ENCODE measurements at regions of chr1 and their contacts with region 1.

Region 1: GRCh38 chr1:208245185-208245705 is 1.1 kb upstream of the PLXNA2 start:
- DNase-seq: peak; percentile 95 to 97
- H3K4me3 ChIP-seq: peak overlapping the region; percentile 89 to 94
- H3K27ac ChIP-seq: peak overlapping the region; percentile 86 to 89
- H3K4me1 ChIP-seq: peaks cover 0 to 60% (median 45%) of the 10 kb centered on the region in 4 donors
- H3K27me3 ChIP-seq: no peaks in the 10 kb centered on the region
- CTCF ChIP-seq: peak; percentile 70 to 88

Region 2: GRCh38 chr1:207885129-207886032 is 359.9 kb before region 1 on chr1:
- intact Hi-C with region 1: loop called (anchors 10 kb)
- DNase-seq: peak; percentile 87 to 90
- H3K4me3 ChIP-seq: no peak overlapping the region
- H3K27ac ChIP-seq: peak overlapping the region in 1 of 2 donors; percentile 40
- H3K4me1 ChIP-seq: peaks cover 4 to 39% (median 29%) of the 10 kb centered on the region in 4 donors
- H3K27me3 ChIP-seq: no peaks in the 10 kb centered on the region
- CTCF ChIP-seq: peak; percentile 95 to 97

Region 3: DNA sequence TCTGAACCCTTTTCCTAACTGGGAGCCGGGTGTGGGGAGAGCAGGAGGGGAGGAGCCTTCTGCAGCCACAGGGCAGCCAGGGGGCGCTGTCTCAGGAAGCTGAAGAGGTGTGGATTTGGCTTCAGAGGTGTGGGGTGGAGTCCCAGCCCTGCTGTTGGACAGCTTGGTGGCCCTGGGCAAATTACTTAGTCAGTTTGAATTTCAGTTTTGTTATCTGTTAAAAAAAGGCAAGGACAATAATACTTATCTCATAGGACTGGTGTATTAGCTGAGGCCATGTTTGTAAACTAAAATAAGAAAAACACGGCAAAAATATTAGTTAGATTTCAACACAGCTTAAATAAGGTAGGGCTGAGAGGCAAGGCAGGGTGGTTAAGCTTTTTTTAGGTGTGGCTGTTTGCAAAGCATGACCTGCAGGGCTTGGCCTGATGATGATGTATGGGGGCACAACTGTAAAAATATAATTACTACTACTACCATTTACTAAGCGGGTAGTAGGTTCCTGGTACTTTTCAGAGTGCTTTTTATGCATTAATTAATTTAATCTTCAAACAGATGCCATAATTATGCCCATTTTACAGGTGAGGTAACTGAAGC is 112.9 kb before region 1 on chr1:
- intact Hi-C with region 1: loop called (anchors 5 kb)
- DNase-seq: peak; percentile 80 to 83
- H3K4me3 ChIP-seq: no peak overlapping the region
- H3K27ac ChIP-seq: no peak overlapping the region
- H3K4me1 ChIP-seq: peaks cover 0 to 47% (median 35%) of the 10 kb centered on the region in 4 donors
- H3K27me3 ChIP-seq: no peaks in the 10 kb centered on the region
- CTCF ChIP-seq: peak; percentile 62 to 72

Region 4: GRCh38 chr1:208142590-208143382 is 102.5 kb before region 1 on chr1:
- intact Hi-C with region 1: no loop called
- DNase-seq: peak in 1 of 2 donors; percentile 59
- H3K4me3 ChIP-seq: no peak overlapping the region
- H3K27ac ChIP-seq: peak overlapping the region; percentile 53 to 54
- H3K4me1 ChIP-seq: peaks cover 0 to 41% (median 23%) of the 10 kb centered on the region in 4 donors
- H3K27me3 ChIP-seq: no peaks in the 10 kb centered on the region
- CTCF ChIP-seq: no peak

Region 5: GRCh38 chr1:208170252-208170651 is 75.0 kb before region 1 on chr1:
- intact Hi-C with region 1: no loop called
- DNase-seq: peak in 1 of 2 donors; percentile 66
- H3K4me3 ChIP-seq: no peak overlapping the region
- H3K27ac ChIP-seq: no peak overlapping the region
- H3K4me1 ChIP-seq: peaks cover 0 to 16% (median 7%) of the 10 kb centered on the region in 4 donors
- H3K27me3 ChIP-seq: no peaks in the 10 kb centered on the region
- CTCF ChIP-seq: no peak

Region 6: DNA sequence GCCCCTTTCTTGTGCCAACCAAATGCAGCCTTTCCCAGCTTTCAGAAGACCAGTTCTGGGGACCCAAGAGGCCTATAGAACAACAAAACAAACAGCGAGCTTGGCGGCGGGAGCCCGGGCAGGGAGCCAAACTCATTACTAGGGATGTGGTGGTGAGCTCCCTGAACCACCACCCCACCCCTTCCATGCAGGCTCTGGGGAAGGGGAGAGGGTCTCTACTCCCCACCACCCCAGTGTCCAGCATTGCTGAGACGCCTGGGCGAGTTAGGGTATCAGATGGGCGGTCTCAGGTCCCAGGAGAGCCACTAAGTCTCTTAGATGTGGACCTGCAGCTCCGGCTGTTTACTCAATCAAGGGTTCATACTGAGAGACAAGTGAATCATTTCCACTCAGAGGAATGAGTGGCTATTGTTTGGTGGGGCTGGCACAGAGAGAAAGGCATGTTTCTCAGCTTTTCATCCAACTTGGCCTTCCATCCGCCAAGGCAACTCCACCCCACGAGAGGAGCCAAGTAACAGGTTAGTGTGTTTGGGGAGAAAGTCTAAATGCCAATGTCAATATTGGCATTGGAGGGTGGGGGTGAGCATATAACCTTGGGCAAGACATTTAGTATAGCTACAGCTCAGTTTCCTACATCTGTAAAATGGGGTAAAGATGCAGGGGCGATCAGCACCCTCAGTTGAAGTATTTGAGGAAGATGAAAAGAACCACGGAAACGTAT is 42.0 kb before region 1 on chr1:
- intact Hi-C with region 1: loop called (anchors 5 kb)
- DNase-seq: no peak
- H3K4me3 ChIP-seq: no peak overlapping the region
- H3K27ac ChIP-seq: peak overlapping the region; percentile 76 to 78
- H3K4me1 ChIP-seq: peaks cover 0 to 80% (median 68%) of the 10 kb centered on the region in 4 donors
- H3K27me3 ChIP-seq: no peaks in the 10 kb centered on the region
- CTCF ChIP-seq: no peak

Region 7: DNA sequence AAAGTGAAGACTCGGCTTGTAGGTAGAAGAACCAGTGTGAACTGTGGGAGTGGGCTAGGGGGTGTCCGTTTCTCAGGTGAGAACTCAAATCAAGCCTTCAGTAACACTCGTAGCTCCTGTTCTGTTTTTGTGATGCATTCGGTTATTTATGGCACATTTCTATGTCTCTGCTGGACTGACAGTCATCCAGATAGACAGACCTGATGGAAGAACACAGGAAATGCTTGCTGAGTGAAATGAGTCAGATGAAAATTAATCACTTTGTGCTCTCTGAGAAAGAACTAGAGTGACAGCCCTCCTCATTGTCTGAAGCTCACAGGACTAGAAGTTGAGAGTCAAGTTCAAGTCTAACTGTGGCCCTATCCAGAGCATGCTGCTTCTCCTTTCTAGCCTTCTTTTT is 359.1 kb after region 1 on chr1:
- intact Hi-C with region 1: no loop called
- DNase-seq: no peak
- H3K4me3 ChIP-seq: no peak overlapping the region
- H3K27ac ChIP-seq: no peak overlapping the region
- H3K4me1 ChIP-seq: peaks cover 0 to 7% (median 0%) of the 10 kb centered on the region in 4 donors
- H3K27me3 ChIP-seq: no peaks in the 10 kb centered on the region
- CTCF ChIP-seq: no peak

Measured in tibial artery (tissue), 4 donors.